ENCODE measurements at regions of chr11 and their contacts with region 1.

Region 1: DNA sequence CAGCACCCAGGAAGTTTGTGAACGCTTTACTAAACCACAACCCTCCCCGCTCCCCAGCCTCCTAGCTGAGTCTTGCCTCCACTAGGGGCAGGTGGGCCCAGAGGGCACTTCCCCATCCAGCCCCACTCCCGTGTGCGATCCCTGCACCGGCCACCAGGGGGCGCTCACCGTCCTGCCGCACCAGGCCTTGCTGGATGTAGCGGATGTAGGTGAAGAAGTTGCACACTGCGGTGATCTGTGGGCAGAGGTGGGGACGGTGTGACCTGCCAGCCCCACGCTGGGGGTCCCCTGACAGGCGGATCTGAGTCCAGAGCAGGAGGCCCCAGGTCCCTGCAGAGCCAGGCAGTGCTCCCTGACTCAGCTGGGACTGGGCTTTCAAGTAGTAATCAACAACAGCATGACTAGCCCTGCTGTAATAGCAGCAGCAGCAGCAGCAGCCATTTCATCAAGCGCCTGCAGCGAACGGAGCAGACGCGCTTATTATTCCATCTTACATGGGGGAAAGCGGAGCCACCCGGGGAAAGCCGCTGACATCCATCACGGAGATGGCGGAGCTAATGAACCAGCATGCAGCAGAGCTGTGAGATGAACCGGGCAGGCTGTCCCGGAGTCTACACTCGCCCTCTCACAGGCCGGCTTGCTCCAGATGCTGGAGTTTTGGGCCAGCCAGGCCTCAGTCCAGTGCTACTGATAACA is 7.9 kb upstream of the FADS3 start:
- DNase-seq: peak; percentile 40
- ATAC-seq: peak; percentile 95
- H3K4me3 ChIP-seq: no peak overlapping the region
- H3K27ac ChIP-seq: no peak overlapping the region
- H3K4me1 ChIP-seq: no peaks in the 10 kb centered on the region
- H3K27me3 ChIP-seq: peaks cover 0 to 1% of the 10 kb centered on the region in 2 experiments; a peak in 1 of 4 replicates
- CTCF ChIP-seq: peak; percentile 99 to 100 (median 99)
- EP300 ChIP-seq: no peak
- POLR2A ChIP-seq: no peak
- RAD21 ChIP-seq: peak; percentile 85

Region 2: DNA sequence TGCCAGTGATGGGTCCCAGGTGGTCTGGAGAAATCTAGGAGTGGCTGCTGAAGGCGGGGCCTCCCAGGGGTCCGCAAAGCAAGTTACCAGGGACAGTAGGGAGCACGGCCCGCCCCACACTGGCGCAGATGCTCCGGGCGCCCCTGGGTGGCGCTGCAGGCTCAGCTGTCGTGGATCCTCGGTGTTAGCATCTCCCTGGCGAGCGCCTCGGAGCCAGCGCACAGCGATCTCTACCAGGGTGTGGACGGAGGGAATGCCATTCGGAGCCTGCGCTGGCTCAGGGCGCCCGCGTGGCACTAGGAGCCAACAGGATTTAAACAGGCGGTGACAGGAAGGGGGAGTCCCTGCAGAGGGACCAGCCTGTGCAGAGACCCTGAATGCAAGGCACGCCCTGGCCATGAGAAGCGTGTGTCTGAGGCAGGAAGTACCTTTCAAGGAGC is 28.1 kb before region 1 on chr11:
- CTCF ChIA-PET with region 1: interaction called, 29 read pairs
- POLR2A ChIA-PET with region 1: no interaction called
- RAD21 ChIA-PET with region 1: interaction called, 6 read pairs
- SMC1A ChIA-PET with region 1: interaction called, 9 read pairs
- in situ Hi-C with region 1: no loop called
- intact Hi-C with region 1: no loop called
- DNase-seq: no peak
- ATAC-seq: peak; percentile 93
- H3K4me3 ChIP-seq: no peak overlapping the region
- H3K27ac ChIP-seq: no peak overlapping the region
- H3K4me1 ChIP-seq: no peaks in the 10 kb centered on the region
- H3K27me3 ChIP-seq: no peaks in the 10 kb centered on the region; a peak in 1 of 4 replicates
- CTCF ChIP-seq: peak; percentile 85 to 94 (median 91)
- EP300 ChIP-seq: no peak
- POLR2A ChIP-seq: no peak
- RAD21 ChIP-seq: peak; percentile 82

Region 3: GRCh38 chr11:61912530-61912898 is 13.2 kb after region 1 on chr11:
- CTCF ChIA-PET with region 1: interaction called, 22 read pairs
- POLR2A ChIA-PET with region 1: no interaction called
- RAD21 ChIA-PET with region 1: no interaction called
- SMC1A ChIA-PET with region 1: interaction called, 4 read pairs
- in situ Hi-C with region 1: no loop called
- intact Hi-C with region 1: no loop called
- DNase-seq: no peak
- ATAC-seq: no peak
- H3K4me3 ChIP-seq: no peak overlapping the region
- H3K27ac ChIP-seq: no peak overlapping the region
- H3K4me1 ChIP-seq: no peaks in the 10 kb centered on the region
- H3K27me3 ChIP-seq: peaks cover 3 to 4% of the 10 kb centered on the region in 2 experiments; a peak in 3 of 4 replicates
- CTCF ChIP-seq: no peak
- EP300 ChIP-seq: no peak
- POLR2A ChIP-seq: no peak
- RAD21 ChIP-seq: no peak

Region 4: GRCh38 chr11:61947486-61948210 is 48.4 kb after region 1 on chr11:
- CTCF ChIA-PET with region 1: interaction called, 126 read pairs
- POLR2A ChIA-PET with region 1: interaction called, 4 read pairs
- RAD21 ChIA-PET with region 1: interaction called, 58 read pairs
- SMC1A ChIA-PET with region 1: interaction called, 40 read pairs
- in situ Hi-C with region 1: no loop called
- intact Hi-C with region 1: loop called (anchors 1 kb)
- DNase-seq: no peak
- ATAC-seq: peak; percentile 93
- H3K4me3 ChIP-seq: no peak overlapping the region
- H3K27ac ChIP-seq: no peak overlapping the region
- H3K4me1 ChIP-seq: no peaks in the 10 kb centered on the region
- H3K27me3 ChIP-seq: no peaks in the 10 kb centered on the region; a peak in 1 of 4 replicates
- CTCF ChIP-seq: peak; percentile 94 to 98 (median 96)
- EP300 ChIP-seq: no peak
- POLR2A ChIP-seq: no peak
- RAD21 ChIP-seq: peak; percentile 94

Region 5: GRCh38 chr11:62061351-62062222 is 162.3 kb after region 1 on chr11:
- CTCF ChIA-PET with region 1: interaction called, 32 read pairs
- POLR2A ChIA-PET with region 1: interaction called, 5 read pairs
- RAD21 ChIA-PET with region 1: interaction called, 3 read pairs
- SMC1A ChIA-PET with region 1: interaction called, 3 read pairs
- in situ Hi-C with region 1: no loop called
- intact Hi-C with region 1: no loop called
- DNase-seq: no peak
- ATAC-seq: no peak
- H3K4me3 ChIP-seq: no peak overlapping the region
- H3K27ac ChIP-seq: no peak overlapping the region
- H3K4me1 ChIP-seq: no peaks in the 10 kb centered on the region
- H3K27me3 ChIP-seq: peaks cover 0 to 1% of the 10 kb centered on the region in 2 experiments; a peak in 1 of 4 replicates
- CTCF ChIP-seq: peak in 2 of 3 experiments; percentile 11 to 21; a peak in 1 of 6 replicates
- EP300 ChIP-seq: no peak
- POLR2A ChIP-seq: no peak
- RAD21 ChIP-seq: no peak

Region 6: DNA sequence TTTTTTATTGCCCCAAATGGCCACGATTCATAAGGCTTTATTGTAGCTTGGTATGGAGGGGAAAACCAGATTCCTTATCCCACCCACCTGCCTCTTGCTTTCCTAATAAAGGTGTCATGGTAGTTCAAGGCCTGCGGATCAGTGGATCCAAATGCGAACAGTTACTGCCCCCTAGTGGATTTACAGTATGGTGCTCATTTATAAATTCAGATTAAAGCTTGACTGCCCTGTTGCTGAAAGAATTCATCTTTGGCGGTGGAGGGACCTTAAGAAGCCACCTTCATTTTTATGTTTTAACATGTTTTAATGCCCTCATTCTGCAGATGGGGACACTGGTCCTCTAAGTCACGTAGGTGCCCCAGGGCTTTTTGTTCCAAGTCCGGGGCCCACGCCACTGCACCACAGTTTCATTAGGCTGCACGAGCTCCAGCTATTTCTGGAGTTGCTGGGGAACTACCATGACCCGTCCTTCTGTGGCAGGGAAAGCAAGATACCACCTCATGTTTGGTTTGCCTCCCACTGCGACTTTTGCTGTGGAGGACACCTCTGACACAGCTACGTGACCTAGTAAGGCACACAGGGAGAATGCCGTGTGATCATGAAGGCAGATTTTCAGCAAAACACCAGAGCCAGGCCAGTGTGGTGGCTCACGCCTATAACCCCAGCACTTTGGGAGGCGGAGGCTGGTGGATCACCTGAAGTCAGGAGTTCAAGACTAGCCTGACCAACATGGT is 208.9 kb after region 1 on chr11:
- CTCF ChIA-PET with region 1: interaction called, 142 read pairs
- POLR2A ChIA-PET with region 1: interaction called, 3 read pairs
- RAD21 ChIA-PET with region 1: interaction called, 65 read pairs
- SMC1A ChIA-PET with region 1: interaction called, 33 read pairs
- in situ Hi-C with region 1: loop called (anchors 5 kb)
- intact Hi-C with region 1: loop called (anchors 1 kb)
- DNase-seq: peak; percentile 11
- ATAC-seq: peak; percentile 79
- H3K4me3 ChIP-seq: no peak overlapping the region
- H3K27ac ChIP-seq: no peak overlapping the region
- H3K4me1 ChIP-seq: no peaks in the 10 kb centered on the region
- H3K27me3 ChIP-seq: no peaks in the 10 kb centered on the region
- CTCF ChIP-seq: peak; percentile 59 to 82 (median 80)
- EP300 ChIP-seq: no peak
- POLR2A ChIP-seq: no peak
- RAD21 ChIP-seq: peak; percentile 91

Region 7: DNA sequence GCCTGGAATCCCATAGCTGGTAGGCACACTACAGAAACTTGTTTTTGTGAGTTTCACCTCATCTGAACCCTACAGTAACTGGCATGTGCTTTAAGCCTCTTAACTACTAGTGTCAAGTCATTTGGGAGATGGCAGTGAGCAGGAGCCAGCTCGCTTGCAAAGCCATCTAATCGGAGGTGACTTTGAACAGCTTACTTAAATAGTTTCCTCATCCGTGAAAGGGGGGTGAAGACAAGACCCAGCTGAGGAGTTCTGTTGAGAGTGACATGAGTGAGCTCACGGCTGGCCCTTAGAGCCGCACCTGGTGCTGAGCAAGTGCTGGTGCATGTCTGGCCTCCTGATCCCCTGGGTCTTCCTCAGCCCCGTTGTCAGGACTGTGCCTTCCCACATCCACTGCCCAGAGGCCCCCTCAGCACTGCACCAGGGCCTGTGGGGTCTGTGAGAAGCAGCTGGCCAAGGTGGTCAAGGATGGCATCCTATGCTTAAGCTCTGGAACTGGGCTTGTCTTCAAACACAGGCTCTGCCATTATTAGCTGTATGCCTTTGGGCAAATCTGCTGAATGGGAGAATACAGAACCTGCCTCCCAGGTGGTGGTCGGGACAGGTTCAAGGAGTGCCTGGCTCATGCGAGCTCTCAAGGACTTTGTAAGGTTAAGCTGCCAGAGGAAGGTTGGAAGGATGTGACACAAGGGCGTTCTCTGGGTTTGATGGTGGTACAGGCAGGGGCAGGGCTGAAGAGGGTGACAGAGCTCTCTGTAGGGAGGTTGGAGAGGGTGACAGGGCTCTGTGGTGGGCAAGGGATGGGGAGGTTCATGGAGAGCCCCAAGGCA is 251.8 kb after region 1 on chr11:
- CTCF ChIA-PET with region 1: no interaction called
- POLR2A ChIA-PET with region 1: no interaction called
- RAD21 ChIA-PET with region 1: no interaction called
- SMC1A ChIA-PET with region 1: no interaction called
- in situ Hi-C with region 1: no loop called
- intact Hi-C with region 1: no loop called
- DNase-seq: no peak
- ATAC-seq: no peak
- H3K4me3 ChIP-seq: no peak overlapping the region
- H3K27ac ChIP-seq: no peak overlapping the region
- H3K4me1 ChIP-seq: no peaks in the 10 kb centered on the region
- H3K27me3 ChIP-seq: no peaks in the 10 kb centered on the region
- CTCF ChIP-seq: no peak
- EP300 ChIP-seq: no peak
- POLR2A ChIP-seq: no peak
- RAD21 ChIP-seq: no peak